ENCODE measurements at regions of chr21 and their contacts with region 1.

Region 1: GRCh38 chr21:46184625-46185555 is 631 bp upstream of the SPATC1L start:
- DNase-seq: peak; percentile 39 to 94 (median 77)
- ATAC-seq: peak; percentile 86
- H3K4me3 ChIP-seq: peak overlapping the region; percentile 64 to 79
- H3K4me3 Mint-ChIP-seq: peak overlapping the region; percentile 86
- H3K27ac ChIP-seq: peak overlapping the region; percentile 67 to 83
- H3K27ac Mint-ChIP-seq: peak overlapping the region; percentile 91
- H3K4me1 ChIP-seq: peaks cover 9% of the 10 kb centered on the region
- H3K4me1 Mint-ChIP-seq: peaks cover 15% of the 10 kb centered on the region
- H3K27me3 ChIP-seq: no peaks in the 10 kb centered on the region
- H3K27me3 Mint-ChIP-seq: no peaks in the 10 kb centered on the region
- CTCF ChIP-seq: no peak

Region 2: DNA sequence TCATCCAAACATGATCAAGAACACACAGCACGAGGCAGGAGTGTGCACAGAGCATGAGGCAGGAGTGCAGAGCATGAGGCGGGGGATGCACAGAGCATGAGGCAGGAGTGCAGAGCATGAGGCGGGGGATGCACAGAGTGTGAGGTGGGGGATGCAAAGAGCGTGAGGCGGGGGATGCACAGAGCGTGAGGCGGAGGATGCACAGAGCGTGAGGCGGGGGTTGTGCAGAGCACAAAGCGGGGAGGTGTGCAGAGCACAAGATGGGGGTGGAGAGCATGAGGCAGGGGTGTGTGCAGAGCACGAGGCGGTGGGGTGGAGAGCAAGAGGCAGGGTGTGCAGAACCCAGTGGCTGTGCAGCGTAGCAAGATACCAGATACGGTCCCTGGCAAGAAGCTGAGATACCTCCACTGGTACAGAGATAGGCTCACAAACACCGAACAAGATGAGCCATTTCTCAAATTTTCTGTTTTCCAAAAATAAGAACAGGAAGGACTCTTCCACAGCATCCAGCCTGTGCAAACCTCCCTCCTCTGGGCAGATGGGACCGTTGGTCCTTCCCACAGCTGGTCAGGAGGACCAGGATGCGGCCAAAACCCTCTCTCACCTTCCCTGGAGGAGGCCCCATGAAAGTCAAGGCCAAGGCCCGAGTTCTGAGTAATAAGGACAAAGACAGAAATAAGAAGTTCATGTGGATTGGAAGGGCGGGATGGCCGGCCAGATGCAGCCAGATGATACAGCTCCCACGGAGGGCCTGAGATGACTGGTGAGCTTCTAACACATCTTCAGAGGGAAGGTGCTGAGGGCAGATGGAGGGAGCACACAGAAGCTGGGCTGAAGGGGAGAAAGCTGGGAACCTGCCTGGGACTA is 12.7 kb before region 1 on chr21:
- CTCF ChIA-PET with region 1: no interaction called
- POLR2A ChIA-PET with region 1: interaction called, 3 read pairs
- intact Hi-C with region 1: loop called in 1 of 2 experiments (anchors 1 kb)
- DNase-seq: peak in 2 of 9 experiments; percentile 0 to 35
- ATAC-seq: no peak
- H3K4me3 ChIP-seq: no peak overlapping the region
- H3K4me3 Mint-ChIP-seq: no peak overlapping the region
- H3K27ac ChIP-seq: no peak overlapping the region
- H3K27ac Mint-ChIP-seq: no peak overlapping the region
- H3K4me1 ChIP-seq: peaks cover 5% of the 10 kb centered on the region
- H3K4me1 Mint-ChIP-seq: peaks cover 9% of the 10 kb centered on the region
- H3K27me3 ChIP-seq: no peaks in the 10 kb centered on the region
- H3K27me3 Mint-ChIP-seq: no peaks in the 10 kb centered on the region
- CTCF ChIP-seq: no peak

Region 3: DNA sequence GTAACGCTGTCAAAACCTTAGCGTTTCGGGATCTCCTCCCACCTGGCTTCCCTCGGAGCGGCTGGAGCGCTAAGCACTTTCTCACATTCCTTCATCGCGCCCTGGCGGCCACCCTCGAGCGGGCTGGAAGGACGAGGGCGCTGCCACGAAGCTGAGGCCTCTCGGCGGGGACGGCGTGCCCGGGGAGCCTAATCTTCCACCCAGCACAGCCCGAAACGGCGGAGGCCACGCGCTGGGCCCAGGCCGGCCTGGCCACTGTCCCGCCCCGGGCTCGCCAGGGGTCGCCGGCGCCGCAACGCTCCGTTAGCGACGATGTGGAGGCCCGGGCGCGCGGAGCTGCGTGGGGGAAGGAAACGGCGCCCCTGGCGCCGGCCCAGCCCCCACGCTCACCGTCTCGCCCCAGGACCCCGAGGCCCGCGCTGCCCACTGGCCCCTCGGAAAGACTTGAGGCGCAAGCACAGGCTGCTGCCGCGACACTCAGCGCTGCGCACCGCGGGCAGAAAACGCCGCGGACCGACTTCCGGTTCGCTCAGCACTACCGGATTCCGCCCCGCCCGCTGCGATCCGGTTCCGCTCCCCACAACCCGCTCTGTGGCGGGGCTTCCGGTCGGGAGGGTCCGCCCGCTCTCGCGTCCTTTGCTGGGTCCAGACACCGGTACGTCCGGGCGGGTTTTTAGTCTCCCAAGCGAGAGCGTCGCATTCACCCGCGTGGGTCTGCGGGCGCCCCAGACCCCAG is 101.0 kb after region 1 on chr21 and contains the start of gene YBEY:
- CTCF ChIA-PET with region 1: no interaction called
- POLR2A ChIA-PET with region 1: no interaction called
- intact Hi-C with region 1: loop called in 1 of 2 experiments (anchors 1 kb)
- DNase-seq: peak; percentile 59 to 93 (median 84)
- ATAC-seq: peak; percentile 79
- H3K4me3 ChIP-seq: peak within 1 kb of the TSS; percentile 85 to 88
- H3K4me3 Mint-ChIP-seq: peak within 1 kb of the TSS; percentile 90
- H3K27ac ChIP-seq: peak within 1 kb of the TSS; percentile 72 to 86
- H3K27ac Mint-ChIP-seq: peak within 1 kb of the TSS; percentile 94
- H3K4me1 ChIP-seq: peaks cover 38% of the 10 kb centered on the region
- H3K4me1 Mint-ChIP-seq: peaks cover 61% of the 10 kb centered on the region
- H3K27me3 ChIP-seq: no peaks in the 10 kb centered on the region
- H3K27me3 Mint-ChIP-seq: no peaks in the 10 kb centered on the region
- CTCF ChIP-seq: peak; percentile 43
- total RNA-seq, gene YBEY: 10.8 to 13.6 TPM

Measured in CD8-positive, alpha-beta T cell (primary cell).